Activated naive CD4-positive, alpha-beta T cell treated with anti-CD3 and anti-CD28 coated beads for 36 hours (primary cell): ENCODE measurements at regions of chr13 and their contacts with region 1.

Region 1: GRCh38 chr13:109778102-109778542 is 8.3 kb downstream of the IRS2 start:
- DNase-seq: peak; percentile 21
- H3K4me3 Mint-ChIP-seq: peak overlapping the region; percentile 27
- H3K27ac Mint-ChIP-seq: peak overlapping the region; percentile 24
- H3K4me1 Mint-ChIP-seq: peaks cover 59% of the 10 kb centered on the region
- H3K27me3 Mint-ChIP-seq: no peaks in the 10 kb centered on the region

Region 2: GRCh38 chr13:109569958-109570711 is 208.0 kb before region 1 on chr13:
- CTCF ChIA-PET with region 1: no interaction called
- intact Hi-C with region 1: loop called (anchors 5 kb)
- DNase-seq: peak; percentile 67
- H3K4me3 Mint-ChIP-seq: no peak overlapping the region
- H3K27ac Mint-ChIP-seq: no peak overlapping the region
- H3K4me1 Mint-ChIP-seq: peaks cover 11% of the 10 kb centered on the region
- H3K27me3 Mint-ChIP-seq: no peaks in the 10 kb centered on the region

Region 3: DNA sequence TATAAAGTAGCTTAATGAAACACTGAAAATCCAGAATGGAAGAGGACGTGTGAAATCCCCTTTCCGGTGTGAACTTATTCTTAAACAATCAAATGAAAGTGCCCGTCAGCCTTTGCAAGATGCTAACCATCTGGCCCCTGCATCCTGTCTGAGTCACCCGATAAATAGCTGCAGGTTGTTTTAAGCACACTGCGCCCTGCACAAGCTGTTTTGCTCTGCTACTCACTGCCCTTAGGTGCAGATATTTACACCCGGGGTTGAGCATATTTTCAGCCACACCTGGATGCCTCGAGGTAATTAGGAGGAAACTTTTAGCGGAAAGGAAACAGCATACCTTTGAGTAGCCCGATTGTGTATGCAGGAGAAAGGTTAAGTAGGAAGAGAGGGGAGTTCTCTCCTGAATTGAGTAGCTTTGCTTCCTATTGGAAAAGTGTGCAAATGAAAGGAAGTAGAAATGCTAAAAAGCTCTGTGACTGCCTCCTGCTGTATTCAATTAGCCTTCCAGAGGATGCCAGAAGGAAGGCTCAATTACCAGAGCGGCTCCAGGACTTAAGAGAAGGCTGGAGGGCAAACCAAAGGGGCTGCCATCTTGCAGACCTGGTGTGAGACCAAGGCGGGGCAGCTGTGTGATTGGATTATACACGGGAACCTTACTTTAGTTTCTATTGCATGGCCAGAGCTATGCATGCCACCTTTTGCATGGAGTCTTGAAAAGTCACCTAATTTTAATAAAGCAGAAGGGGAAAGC is 34.2 kb before region 1 on chr13:
- CTCF ChIA-PET with region 1: no interaction called
- intact Hi-C with region 1: loop called (anchors 1 kb)
- DNase-seq: peak; percentile 65
- H3K4me3 Mint-ChIP-seq: no peak overlapping the region
- H3K27ac Mint-ChIP-seq: no peak overlapping the region
- H3K4me1 Mint-ChIP-seq: peaks cover 10% of the 10 kb centered on the region
- H3K27me3 Mint-ChIP-seq: no peaks in the 10 kb centered on the region

Region 4: DNA sequence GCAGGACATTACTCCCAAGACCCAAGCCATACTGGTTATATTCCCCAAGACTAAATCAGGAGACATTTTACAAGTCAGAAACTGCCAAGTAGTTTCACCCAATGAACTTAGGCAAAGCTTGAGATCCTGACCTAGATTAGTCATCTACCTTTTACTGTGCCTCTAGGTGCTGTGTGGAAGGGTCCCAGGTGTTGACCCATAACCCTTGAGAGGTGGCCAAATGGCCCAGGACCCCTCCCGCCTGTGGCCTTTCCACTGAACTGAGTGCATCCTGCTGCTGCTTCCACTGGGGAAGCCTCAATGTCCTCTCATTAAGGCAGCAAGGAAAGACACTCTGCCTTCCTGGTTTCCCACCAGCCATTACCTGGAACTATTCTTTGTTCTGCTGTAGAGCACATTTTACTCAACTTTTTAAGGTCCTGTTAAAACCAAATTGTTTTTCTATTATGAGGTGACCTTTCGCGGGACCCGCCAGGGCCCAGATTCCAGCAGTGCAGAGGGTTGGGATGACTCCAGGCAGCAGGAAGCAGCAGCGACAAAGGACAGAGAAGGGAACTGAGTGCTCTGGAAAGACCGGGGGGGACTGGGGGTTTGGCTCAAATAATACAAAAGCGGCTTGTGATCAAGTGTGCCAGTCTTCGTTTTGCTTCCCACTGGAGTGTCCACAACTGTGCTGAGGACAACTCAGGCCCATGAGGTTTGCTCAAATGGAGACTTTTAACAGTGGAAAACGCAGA is 1109.6 kb after region 1 on chr13:
- CTCF ChIA-PET with region 1: no interaction called
- intact Hi-C with region 1: no loop called
- DNase-seq: no peak
- H3K4me3 Mint-ChIP-seq: no peak overlapping the region
- H3K27ac Mint-ChIP-seq: no peak overlapping the region
- H3K4me1 Mint-ChIP-seq: peaks cover 5% of the 10 kb centered on the region
- H3K27me3 Mint-ChIP-seq: no peaks in the 10 kb centered on the region